CD8-positive, alpha-beta memory T cell (primary cell): ENCODE measurements at regions of chr4 and their contacts with region 1.

Region 1: GRCh38 chr4:153466081-153466948 is at the start of gene TMEM131L:
- DNase-seq: peak; percentile 59 to 79 (median 74)
- H3K4me3 ChIP-seq: peak within 1 kb of the TSS; percentile 84
- H3K4me3 Mint-ChIP-seq: peak within 1 kb of the TSS; percentile 94 to 98 (median 96)
- H3K27ac ChIP-seq: peak within 1 kb of the TSS; percentile 77
- H3K27ac Mint-ChIP-seq: peak within 1 kb of the TSS; percentile 89 to 99 (median 97)
- H3K4me1 ChIP-seq: peaks cover 33% of the 10 kb centered on the region
- H3K4me1 Mint-ChIP-seq: peaks cover 45 to 53% (median 50%) of the 10 kb centered on the region in 3 donors
- H3K27me3 ChIP-seq: no peaks in the 10 kb centered on the region
- H3K27me3 Mint-ChIP-seq: peaks cover 0 to 3% of the 10 kb centered on the region in 2 donors
- total RNA-seq, gene TMEM131L: 28.1 to 29.6 TPM

Region 2: GRCh38 chr4:153427363-153428071 is 38.8 kb before region 1 on chr4:
- CTCF ChIA-PET with region 1: interaction called, 46 read pairs
- POLR2A ChIA-PET with region 1: interaction called, 5 read pairs
- DNase-seq: no peak
- H3K4me3 ChIP-seq: no peak overlapping the region
- H3K4me3 Mint-ChIP-seq: peak overlapping the region in 4 of 7 donors; percentile 24 to 39 (median 24)
- H3K27ac ChIP-seq: no peak overlapping the region
- H3K27ac Mint-ChIP-seq: peak overlapping the region; percentile 27 to 89 (median 64)
- H3K4me1 ChIP-seq: peaks cover 57% of the 10 kb centered on the region
- H3K4me1 Mint-ChIP-seq: peaks cover 36 to 45% (median 44%) of the 10 kb centered on the region in 3 donors
- H3K27me3 ChIP-seq: no peaks in the 10 kb centered on the region
- H3K27me3 Mint-ChIP-seq: no peaks in the 10 kb centered on the region

Region 3: DNA sequence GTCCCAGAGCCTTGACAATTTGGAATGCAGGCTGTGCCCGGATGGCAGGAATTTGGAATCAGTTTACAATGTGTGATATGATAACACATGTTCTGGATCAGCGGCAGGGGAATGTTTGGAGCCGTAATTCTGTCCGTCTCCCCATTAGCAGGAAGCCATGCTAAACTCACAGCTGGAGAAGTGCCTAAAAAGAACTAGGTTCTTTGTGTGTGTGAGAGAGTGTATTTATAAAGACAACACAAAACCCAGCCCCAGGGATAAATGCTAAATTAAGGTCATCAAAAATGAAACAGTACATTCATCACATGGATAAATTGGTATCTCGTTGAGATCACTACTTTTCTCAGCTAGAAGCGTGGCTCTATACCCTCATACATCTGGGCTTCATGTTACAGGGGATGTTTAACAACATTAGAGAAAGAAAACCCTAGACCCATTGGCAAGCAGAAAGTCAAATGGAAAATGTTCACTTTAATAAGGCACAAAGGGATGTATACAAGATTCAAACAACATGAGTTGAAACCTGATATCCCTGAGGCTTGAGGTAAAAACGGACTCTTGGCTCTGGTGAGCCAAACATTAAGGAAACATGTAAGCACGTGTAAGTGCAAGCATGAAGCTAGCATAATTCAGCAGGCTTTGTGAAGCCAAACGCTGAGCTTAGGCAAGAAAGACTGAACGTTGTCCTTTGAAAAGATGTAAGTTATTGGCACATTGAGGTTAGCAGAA is 18.1 kb before region 1 on chr4:
- CTCF ChIA-PET with region 1: interaction called, 10 read pairs
- POLR2A ChIA-PET with region 1: interaction called, 4 read pairs
- DNase-seq: no peak
- H3K4me3 ChIP-seq: no peak overlapping the region
- H3K4me3 Mint-ChIP-seq: no peak overlapping the region
- H3K27ac ChIP-seq: no peak overlapping the region
- H3K27ac Mint-ChIP-seq: peak overlapping the region in 1 of 8 donors; percentile 26
- H3K4me1 ChIP-seq: peaks cover 18% of the 10 kb centered on the region
- H3K4me1 Mint-ChIP-seq: peaks cover 15% of the 10 kb centered on the region in 3 donors
- H3K27me3 ChIP-seq: no peaks in the 10 kb centered on the region
- H3K27me3 Mint-ChIP-seq: no peaks in the 10 kb centered on the region

Region 4: DNA sequence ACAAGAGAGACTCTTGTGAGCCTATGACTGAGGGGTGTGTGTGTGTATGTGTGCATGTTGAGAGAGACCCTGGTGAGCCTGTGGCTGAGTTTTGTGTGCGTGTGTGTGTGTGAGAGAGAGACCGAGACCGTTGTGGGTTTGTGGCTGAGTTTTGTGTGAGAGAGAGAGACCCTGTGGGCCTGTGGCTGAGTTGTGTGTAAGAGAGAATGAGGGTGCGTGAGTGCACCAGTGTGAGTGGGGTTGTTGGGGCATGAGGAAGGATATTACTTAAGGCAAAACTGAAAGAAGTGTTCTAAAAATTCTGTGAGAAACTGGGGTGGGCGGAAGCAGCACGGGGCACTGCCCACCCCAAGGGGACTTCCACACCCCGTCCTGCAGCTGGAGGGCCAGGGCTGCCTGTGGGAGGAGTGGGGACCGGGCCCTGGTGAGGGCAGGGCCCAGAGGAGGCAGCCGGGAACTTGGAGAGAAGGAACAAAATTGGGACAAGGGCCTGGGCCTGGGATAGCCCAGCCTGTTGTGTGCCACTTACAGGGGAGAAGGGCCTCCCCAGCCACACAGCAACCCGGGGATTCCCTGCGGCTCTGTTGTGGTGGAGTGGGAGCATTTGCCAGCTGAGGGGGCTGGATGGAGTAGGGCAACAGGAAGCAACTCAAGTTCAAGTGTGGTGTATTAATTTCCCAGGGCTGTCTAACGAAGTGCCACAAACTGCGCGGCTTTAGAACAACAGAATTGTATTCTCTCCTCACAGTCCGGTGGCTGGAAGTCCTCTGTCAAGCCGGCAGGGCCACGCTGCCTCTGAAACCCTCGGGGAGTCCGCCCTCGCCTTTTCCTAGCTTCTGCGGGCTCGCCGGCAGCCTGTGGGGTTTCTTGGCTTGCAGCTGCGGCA is 21.9 kb after region 1 on chr4:
- CTCF ChIA-PET with region 1: interaction called, 70 read pairs
- POLR2A ChIA-PET with region 1: interaction called, 12 read pairs
- DNase-seq: peak; percentile 66 to 88 (median 78)
- H3K4me3 ChIP-seq: peak overlapping the region; percentile 54
- H3K4me3 Mint-ChIP-seq: peak overlapping the region; percentile 77 to 87 (median 81)
- H3K27ac ChIP-seq: peak overlapping the region; percentile 58
- H3K27ac Mint-ChIP-seq: peak overlapping the region; percentile 93 to 100 (median 96)
- H3K4me1 ChIP-seq: peaks cover 86% of the 10 kb centered on the region
- H3K4me1 Mint-ChIP-seq: peaks cover 79 to 83% (median 81%) of the 10 kb centered on the region in 3 donors
- H3K27me3 ChIP-seq: no peaks in the 10 kb centered on the region
- H3K27me3 Mint-ChIP-seq: no peaks in the 10 kb centered on the region

Region 5: DNA sequence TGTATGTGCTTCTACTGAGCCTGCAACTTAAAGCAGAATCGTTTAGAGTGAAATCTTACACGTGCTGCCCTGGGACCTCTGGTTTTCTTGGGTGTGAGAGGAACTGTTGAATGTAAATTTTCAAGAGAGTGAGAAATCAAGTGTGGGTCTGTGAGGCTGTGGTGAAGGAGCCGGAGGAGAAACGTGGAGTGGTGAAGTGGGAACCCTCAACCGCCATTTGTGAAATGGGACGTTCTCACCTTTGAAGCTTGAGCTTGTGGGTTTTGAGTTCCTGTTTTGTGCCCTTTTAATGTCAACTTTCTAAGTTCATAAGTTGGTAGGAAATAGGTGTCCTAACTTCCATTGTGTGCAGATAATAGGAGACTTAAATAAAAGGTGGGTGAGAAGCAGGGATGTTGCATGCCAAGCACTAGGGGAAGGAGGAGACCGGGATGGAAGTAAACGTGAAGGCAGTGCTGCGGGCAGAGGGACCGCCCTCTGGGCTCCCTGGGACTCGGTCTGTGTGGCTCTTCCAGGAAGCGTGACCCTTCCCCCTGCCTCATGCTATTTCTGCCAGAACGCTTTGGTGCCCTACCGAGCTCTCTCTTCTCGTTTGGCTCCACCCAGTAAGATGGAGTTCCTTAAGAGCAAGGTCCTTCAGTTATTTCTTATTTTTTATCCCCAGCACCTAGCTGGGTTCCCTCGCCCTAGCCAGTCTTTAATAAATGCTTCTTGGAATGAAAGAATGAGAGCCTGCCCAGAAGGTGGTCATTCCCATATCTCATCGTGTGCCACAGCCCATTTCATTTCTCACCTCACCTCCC is 55.9 kb after region 1 on chr4:
- CTCF ChIA-PET with region 1: interaction called, 8 read pairs
- POLR2A ChIA-PET with region 1: interaction called, 12 read pairs
- DNase-seq: peak; percentile 26 to 80 (median 66)
- H3K4me3 ChIP-seq: peak overlapping the region; percentile 38
- H3K4me3 Mint-ChIP-seq: peak overlapping the region; percentile 65 to 82 (median 76)
- H3K27ac ChIP-seq: peak overlapping the region; percentile 28
- H3K27ac Mint-ChIP-seq: peak overlapping the region; percentile 71 to 96 (median 86)
- H3K4me1 ChIP-seq: peaks cover 92% of the 10 kb centered on the region
- H3K4me1 Mint-ChIP-seq: peaks cover 89 to 97% (median 97%) of the 10 kb centered on the region in 3 donors
- H3K27me3 ChIP-seq: no peaks in the 10 kb centered on the region
- H3K27me3 Mint-ChIP-seq: peaks cover 0 to 1% of the 10 kb centered on the region in 2 donors

Region 6: GRCh38 chr4:153573881-153574802 is 107.8 kb after region 1 on chr4:
- CTCF ChIA-PET with region 1: interaction called, 45 read pairs
- POLR2A ChIA-PET with region 1: interaction called, 16 read pairs
- DNase-seq: peak; percentile 33 to 80 (median 52)
- H3K4me3 ChIP-seq: no peak overlapping the region
- H3K4me3 Mint-ChIP-seq: peak overlapping the region in 3 of 7 donors; percentile 24 to 46 (median 30)
- H3K27ac ChIP-seq: no peak overlapping the region
- H3K27ac Mint-ChIP-seq: peak overlapping the region in 7 of 8 donors; percentile 22 to 90 (median 63)
- H3K4me1 ChIP-seq: peaks cover 20% of the 10 kb centered on the region
- H3K4me1 Mint-ChIP-seq: peaks cover 53 to 73% (median 65%) of the 10 kb centered on the region in 3 donors
- H3K27me3 ChIP-seq: no peaks in the 10 kb centered on the region
- H3K27me3 Mint-ChIP-seq: no peaks in the 10 kb centered on the region